ENCODE measurements at regions of chr4 and their contacts with region 1.

Region 1: GRCh38 chr4:94621491-94622080 is 136.2 kb upstream of the BMPR1B start:
- DNase-seq: no peak
- H3K4me3 Mint-ChIP-seq: no peak overlapping the region
- H3K27ac Mint-ChIP-seq: no peak overlapping the region
- H3K4me1 Mint-ChIP-seq: no peaks in the 10 kb centered on the region
- H3K27me3 Mint-ChIP-seq: no peaks in the 10 kb centered on the region

Region 2: DNA sequence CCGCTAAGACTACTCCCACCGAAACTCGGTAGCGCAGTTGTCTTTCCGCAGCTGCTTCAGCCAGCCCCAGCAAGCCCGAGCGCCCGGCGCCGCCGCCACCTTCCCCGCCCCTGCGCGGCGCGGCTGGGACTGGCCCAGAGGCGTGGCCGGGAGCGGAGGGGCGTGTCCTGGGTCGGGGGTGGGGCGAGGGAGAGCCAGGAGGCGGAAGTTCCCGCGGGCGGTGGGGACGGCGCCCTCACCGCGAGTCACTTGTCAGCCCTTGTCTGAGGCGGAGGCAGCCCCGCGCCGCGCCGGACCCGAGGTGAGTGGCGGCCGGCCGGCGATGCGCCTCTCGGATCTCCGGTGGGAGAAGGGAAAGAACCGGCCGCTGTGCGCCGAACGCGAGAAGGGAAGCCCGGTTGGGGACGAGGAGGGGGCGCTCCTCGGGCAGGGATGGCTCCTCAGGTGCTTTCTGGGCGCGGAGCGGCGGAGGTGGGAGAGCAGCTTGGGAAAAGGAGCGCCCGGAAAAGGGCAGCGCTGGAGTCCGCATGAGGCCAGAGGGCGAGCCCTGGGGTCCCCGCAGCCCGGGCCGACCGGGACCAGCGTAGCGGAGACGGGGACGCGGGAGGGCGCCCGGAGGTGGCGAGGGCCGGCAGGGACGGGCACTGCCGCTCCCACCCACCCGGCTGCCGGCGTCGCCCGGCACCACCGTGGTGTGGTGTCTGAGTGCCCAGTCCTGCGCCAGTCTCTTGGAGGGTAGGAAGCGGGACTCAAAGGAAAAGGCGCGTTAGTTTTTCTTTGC is 169.7 kb before region 1 on chr4 and contains the start of gene PDLIM5:
- intact Hi-C with region 1: no loop called
- DNase-seq: peak; percentile 86
- H3K4me3 Mint-ChIP-seq: peak within 1 kb of the TSS; percentile 86
- H3K27ac Mint-ChIP-seq: peak within 1 kb of the TSS; percentile 53
- H3K4me1 Mint-ChIP-seq: peaks cover 18% of the 10 kb centered on the region
- H3K27me3 Mint-ChIP-seq: peaks cover 36% of the 10 kb centered on the region
- total RNA-seq, gene PDLIM5: 24.2 and 25.1 TPM in 2 replicates

Region 3: DNA sequence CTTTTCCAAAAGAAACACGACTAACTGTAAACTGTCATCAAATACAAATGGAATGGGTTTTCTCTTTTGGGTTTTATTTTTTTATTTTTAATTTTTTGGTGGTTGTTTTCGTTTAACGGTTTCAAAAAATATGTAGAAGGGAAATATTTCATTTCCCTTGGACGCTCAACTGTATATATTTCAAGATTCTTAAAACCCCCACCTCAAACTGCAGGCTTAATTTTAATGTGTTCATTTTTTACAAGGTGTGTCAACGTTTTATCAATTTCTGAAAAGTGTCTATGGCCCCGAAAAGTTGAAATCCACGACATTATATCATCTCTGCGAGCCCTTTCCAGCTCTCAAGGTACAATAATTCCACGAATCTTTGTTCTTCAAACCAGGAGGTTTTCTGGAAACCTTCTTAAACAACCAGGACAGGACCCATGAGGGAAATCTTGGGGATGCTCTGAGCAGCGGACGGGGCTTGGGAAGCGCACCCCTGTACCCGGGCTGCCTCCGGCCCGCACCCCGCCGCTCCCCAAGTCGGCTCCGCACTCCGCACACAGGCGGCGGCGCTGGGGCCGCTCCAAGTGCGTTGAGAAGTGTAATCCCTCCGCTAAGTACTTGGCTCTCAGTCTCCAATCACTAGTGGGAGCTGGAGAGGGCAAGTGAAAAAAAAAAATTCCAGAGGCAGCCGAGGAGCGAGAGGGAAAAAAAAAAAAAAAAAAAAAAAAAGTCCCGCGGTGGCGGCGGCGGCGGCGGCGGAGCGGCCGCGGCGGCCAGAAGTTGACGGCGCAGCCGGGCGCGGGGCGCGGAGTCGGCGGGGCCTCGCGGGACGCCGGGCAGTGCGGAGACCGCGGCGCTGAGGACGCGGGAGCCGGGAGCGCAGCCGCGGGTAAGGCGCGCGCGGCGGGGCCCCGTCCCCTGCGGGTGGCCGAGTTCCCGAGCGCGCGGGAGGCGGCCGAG is 135.9 kb after region 1 on chr4 and contains the start of gene BMPR1B:
- intact Hi-C with region 1: loop called (anchors 10 kb)
- DNase-seq: no peak
- H3K4me3 Mint-ChIP-seq: peak within 1 kb of the TSS; percentile 65
- H3K27ac Mint-ChIP-seq: no peak within 1 kb of the TSS
- H3K4me1 Mint-ChIP-seq: peaks cover 6% of the 10 kb centered on the region
- H3K27me3 Mint-ChIP-seq: peaks cover 76% of the 10 kb centered on the region
- total RNA-seq, gene BMPR1B: not detected in 2 replicates

Measured in activated T-helper 2 cell treated with anti-CD3 and anti-CD28 coated beads, Interferon-gamma antibody, Interleukin-2, Interleukin-4, amounts not matched to agents 10 μg/mL and 5 μg/mL and 100 μg/mL, durations not matched to agents 14 hours and 24 hours and 36 hours (primary cell).